ENCODE measurements at regions of chr4 and their contacts with region 1.

Region 1: GRCh38 chr4:16082426-16083240 is 1.2 kb downstream of the PROM1 start:
- DNase-seq: peak; percentile 37
- H3K4me3 Mint-ChIP-seq: peak overlapping the region; percentile 82
- H3K27ac Mint-ChIP-seq: peak overlapping the region; percentile 50
- H3K4me1 Mint-ChIP-seq: peaks cover 6% of the 10 kb centered on the region
- H3K27me3 Mint-ChIP-seq: peaks cover 18% of the 10 kb centered on the region
- CTCF ChIP-seq: no peak

Region 2: GRCh38 chr4:15513545-15513944 is 569.1 kb before region 1 on chr4:
- CTCF ChIA-PET with region 1: no interaction called
- intact Hi-C with region 1: no loop called
- DNase-seq: no peak
- H3K4me3 Mint-ChIP-seq: no peak overlapping the region
- H3K27ac Mint-ChIP-seq: no peak overlapping the region
- H3K4me1 Mint-ChIP-seq: no peaks in the 10 kb centered on the region
- H3K27me3 Mint-ChIP-seq: no peaks in the 10 kb centered on the region
- CTCF ChIP-seq: no peak

Region 3: DNA sequence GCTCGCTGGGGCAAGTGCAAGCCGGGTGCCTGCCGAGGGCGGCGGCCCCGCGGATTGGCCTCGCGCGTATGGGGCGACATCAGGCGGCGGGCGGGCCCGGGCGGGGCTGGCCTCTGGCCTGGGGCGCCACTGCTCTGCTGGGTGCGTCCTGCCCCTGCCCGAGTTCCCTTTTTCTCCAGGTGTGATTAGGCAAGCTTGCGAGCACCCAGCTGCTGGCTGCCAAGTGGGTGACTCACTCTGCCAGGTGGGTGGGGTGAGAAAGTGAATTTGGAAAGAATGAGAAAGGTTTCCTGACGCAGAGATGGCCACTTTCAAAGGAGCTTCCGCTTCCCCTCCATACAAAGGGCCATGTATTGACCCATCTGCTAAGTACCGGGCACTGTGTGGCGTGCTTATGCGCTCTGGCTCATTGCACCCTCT is 176.6 kb before region 1 on chr4:
- CTCF ChIA-PET with region 1: no interaction called
- intact Hi-C with region 1: no loop called
- DNase-seq: peak; percentile 91
- H3K4me3 Mint-ChIP-seq: no peak overlapping the region
- H3K27ac Mint-ChIP-seq: peak overlapping the region; percentile 68
- H3K4me1 Mint-ChIP-seq: peaks cover 18% of the 10 kb centered on the region
- H3K27me3 Mint-ChIP-seq: no peaks in the 10 kb centered on the region
- CTCF ChIP-seq: no peak

Region 4: DNA sequence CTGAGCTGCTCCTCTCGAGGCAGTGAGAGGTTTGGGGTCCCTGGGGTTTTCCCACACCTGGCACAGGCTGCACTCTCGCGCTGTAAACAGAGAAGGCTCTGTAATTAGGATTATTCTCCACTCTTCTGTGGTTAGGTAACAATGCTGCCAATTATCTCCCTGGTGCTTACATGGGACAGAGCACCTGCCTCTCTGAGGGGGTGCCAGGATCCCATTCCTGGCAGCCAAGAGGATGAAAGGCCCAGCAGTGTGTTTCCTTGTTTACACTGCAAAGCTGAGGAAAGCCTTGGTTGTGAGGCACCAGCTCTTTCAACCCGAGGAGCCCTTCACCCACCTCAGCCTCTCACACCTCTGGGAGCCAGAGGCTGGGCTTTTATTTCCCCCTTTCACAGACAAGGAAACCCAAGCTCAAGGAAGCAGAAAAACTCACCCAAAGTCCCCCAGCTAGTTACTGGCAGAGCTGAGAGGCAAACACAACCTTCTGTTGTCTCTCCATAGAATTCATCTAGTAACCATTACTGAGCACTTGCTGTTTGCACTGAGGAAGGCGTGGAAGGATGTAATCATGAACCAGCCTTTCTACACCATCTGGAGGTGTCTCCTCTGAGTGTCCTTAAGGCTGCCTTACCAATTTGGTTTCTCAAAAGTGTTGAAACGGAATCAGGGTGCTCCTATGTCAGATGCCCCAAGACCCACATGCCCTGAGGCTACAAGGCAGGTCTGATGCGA is 40.9 kb after region 1 on chr4:
- CTCF ChIA-PET with region 1: no interaction called
- intact Hi-C with region 1: loop called (anchors 5 kb)
- DNase-seq: peak; percentile 70
- H3K4me3 Mint-ChIP-seq: no peak overlapping the region
- H3K27ac Mint-ChIP-seq: peak overlapping the region; percentile 57
- H3K4me1 Mint-ChIP-seq: peaks cover 18% of the 10 kb centered on the region
- H3K27me3 Mint-ChIP-seq: no peaks in the 10 kb centered on the region
- CTCF ChIP-seq: no peak

Measured in Calu3 (cell line).